AG04449 (cell line): ENCODE measurements at regions of chr17 and their contacts with region 1.

Region 1: DNA sequence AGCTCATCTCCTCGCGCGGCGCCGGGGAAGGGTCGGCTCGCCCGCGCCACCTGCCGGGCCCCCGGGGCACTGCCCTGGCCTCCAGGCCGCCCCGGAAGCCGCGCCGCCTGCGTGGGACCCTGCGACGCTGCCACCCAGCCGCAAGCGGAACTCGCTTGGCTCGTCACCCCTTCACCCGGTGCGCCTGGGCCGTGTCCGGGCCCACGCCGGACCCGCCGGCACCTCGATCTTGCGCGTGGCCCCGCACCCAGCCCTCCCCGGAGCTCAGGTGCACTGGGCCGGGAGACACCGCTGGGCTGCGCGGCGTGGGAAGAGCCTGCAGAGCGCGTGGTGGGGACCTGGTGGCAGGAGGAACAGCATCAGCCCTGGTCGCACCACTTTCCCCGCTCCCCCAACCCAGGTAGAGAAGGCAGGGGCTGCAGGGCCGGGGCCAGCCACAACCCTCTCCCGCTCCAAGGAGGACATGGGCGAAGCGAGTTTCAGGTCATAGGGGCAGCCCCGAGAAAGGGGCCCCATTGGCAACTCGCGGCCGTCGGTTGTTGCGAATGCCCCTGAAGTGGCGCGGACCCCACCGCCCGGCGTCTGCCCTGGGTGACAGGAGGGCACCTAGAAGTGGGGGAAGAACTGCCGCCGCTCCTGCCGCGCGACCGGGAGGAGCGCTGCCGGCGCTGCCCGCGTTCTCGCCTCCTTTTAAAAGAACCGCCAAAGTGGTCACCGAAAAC is 363 bp upstream of the MIF4GD start:
- DNase-seq: no peak
- H3K4me3 ChIP-seq: peak overlapping the region; percentile 71
- CTCF ChIP-seq: peak; percentile 68

Region 2: GRCh38 chr17:75039238-75039637 is 232.2 kb before region 1 on chr17:
- CTCF ChIA-PET with region 1: no interaction called
- POLR2A ChIA-PET with region 1: no interaction called
- DNase-seq: no peak
- H3K4me3 ChIP-seq: no peak overlapping the region
- CTCF ChIP-seq: no peak

Region 3: DNA sequence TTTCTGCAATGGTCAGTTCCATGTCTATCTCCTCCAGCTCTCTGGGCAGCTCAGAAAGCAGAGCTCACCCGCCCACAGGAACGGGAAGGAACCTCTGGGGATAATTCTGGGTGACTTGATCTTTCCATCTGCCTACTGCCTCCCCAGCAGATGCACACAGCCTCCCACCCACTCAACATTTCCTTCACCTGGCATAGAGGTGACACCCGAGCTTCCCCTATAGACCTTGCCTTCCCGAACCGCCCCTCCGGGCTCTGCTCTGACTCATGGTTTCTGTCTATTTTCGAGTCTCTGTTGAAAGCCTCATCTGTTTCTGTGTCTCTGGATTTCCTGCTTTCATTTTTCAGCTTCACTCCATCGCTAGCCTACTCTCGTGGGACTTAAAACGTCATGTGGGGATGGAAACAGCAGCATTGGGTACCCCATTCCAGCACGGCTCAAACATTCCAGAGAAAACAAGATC is 21.4 kb before region 1 on chr17:
- CTCF ChIA-PET with region 1: interaction called, 43 read pairs
- POLR2A ChIA-PET with region 1: interaction called, 3 read pairs
- DNase-seq: no peak
- H3K4me3 ChIP-seq: no peak overlapping the region; the same call in 1 of the 2 replicates
- CTCF ChIP-seq: no peak

Region 4: DNA sequence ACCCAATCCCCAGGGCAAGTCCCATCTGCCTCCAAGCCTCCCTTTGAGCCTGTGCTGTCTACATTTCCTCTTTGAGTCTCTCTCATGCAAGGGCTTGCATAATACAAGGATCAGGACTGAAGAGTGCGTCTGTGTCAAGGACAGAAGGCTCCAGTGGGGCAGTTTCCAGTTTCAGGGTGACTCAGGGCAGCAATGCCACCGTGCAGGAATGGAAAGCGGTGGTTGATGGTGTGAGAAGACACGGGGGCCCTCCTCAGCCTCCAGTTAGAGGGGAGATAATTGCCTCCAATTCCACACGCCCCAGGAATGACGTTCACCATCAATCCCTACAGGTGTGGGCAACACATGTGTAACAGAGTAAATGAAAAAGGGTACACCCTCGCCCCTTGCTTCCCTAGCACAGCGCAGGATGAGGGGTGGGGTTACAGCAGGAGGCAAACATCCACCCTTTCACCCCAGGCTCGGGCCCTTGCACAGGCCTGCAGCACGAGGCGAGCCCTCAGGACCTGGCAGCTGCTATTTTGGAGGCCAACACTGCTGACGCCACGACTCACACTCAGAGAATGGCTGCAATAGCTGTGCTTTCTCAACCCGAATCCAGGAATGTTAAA is 42.7 kb after region 1 on chr17:
- CTCF ChIA-PET with region 1: interaction called, 11 read pairs
- POLR2A ChIA-PET with region 1: no interaction called
- DNase-seq: no peak
- H3K4me3 ChIP-seq: no peak overlapping the region
- CTCF ChIP-seq: no peak

Region 5: GRCh38 chr17:75325827-75326225 is 54.4 kb after region 1 on chr17:
- CTCF ChIA-PET with region 1: interaction called, 24 read pairs
- POLR2A ChIA-PET with region 1: no interaction called
- DNase-seq: no peak
- H3K4me3 ChIP-seq: no peak overlapping the region
- CTCF ChIP-seq: no peak

Region 6: DNA sequence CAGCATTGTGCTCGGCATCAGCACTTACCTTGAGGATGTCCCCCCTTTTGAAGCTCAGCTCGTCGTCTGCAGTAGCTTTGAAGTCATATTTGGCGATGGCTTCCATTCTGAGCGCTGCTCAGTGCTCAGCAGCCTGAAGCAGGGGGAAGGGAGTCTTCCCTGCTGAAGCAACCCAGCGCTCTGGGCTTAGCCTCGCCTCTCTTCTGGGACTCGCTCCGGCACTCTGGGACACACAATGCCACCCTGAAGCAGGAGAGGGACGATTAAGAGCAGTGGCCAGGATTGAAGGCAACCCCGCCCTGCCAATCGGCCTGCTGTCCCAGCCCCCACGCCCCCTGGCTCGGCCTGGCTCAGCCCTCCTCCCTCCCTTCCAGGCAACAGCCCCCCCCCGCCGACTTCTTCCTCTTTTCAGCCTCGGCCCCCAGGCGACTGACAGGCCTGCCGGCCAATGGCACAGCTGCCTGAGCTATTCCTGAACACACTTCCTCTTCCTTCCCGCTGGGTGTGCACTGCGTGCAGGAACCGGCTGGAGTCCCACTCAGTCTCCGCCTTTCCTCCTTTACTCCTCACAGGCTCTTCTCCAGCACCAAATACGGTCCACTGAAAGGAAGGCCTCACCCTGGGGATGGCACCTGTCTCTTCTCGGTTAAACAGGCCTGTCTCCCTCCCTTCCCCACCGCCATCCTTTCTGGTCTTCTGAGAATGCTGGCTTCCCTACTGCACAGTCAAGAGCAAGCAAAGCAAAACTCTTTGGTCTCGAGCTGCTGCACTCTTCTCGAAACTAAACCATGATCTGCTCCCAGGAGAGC is 122.3 kb after region 1 on chr17:
- CTCF ChIA-PET with region 1: interaction called, 55 read pairs
- POLR2A ChIA-PET with region 1: interaction called, 5 read pairs
- DNase-seq: peak; percentile 93
- H3K4me3 ChIP-seq: peak overlapping the region; percentile 88
- CTCF ChIP-seq: no peak

Region 7: DNA sequence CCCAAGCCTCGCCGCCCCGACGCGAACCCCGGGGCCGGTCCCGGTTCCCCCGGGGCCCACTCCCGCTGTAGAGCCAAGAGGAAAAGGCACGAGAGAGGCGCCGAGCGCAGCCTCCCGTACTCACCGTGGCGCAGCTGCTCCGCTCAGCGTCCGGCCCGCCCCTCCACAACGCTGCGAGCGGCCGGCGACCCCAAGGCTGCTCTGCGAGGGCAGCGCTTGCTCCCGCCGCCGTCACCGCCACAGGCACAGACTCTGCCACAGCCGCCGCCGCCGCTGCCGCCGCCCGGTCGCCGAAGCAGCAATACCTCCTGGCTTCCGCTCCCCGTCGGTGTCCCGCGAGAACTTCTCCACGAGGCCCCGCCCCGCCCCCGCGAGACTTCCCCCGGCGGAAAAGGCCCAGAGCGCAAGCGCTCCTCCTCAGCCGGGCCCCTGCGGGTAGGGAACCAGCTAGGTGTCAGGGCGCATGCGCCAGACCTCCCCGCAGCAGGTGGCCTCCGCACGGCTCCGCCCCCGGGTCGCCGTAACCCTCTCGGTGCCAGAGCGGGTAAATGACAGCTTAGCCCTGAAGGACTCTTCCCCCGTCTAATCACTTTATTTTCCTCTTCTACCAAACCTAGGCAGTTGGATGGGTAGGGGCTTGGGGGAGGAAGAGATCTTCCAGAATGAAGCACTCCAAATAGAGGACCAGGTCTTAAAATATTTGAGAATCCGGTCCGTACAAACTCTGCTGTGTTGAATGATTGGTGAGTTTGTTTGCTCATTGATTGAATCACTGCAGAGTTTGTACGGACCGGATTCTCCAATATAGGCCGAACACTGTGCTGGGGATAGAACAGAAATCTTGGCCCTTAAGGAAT is 134.2 kb after region 1 on chr17 and contains the start of gene GRB2:
- CTCF ChIA-PET with region 1: interaction called, 28 read pairs
- POLR2A ChIA-PET with region 1: interaction called, 12 read pairs
- DNase-seq: no peak
- H3K4me3 ChIP-seq: peak within 1 kb of the TSS; percentile 93
- CTCF ChIP-seq: no peak

Region 8: DNA sequence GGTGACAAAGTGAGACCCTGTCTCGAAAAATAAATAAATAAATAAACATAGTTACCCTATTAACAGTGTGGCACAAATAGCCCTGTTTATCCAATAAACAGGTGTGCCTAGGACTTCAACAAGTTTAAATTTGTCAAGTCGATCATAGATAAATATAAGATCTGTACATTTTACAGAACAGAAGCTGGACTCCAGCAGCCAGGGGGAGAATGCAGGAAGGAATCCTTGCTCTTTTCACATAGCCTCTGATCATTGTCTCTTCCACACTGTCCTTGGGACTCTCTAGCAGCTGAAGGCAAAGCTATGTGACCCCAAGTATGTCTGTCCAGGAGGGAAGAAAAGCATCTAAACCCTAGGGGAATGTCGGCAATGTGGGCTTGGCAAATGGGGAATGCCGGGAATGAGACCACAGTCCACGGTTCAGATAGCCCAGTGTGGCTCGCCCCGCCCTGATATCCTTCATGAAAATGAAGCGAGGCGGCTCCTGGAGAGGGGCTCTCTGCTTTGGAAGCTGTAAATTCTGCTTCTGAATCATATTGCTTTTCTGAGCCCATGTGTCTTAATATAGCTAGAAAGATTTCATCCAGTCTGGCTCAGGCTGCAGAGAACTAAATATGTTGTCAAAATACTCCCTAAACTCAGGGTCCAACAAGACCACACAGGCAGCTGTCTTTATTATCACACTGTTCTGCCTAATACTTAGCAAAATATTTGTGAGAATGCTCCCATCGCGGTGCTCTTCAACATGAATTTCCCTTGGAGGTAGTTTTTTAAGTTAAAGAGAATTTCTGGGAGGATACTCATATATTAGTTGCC is 159.0 kb after region 1 on chr17:
- CTCF ChIA-PET with region 1: interaction called, 15 read pairs
- POLR2A ChIA-PET with region 1: no interaction called
- DNase-seq: peak; percentile 82
- H3K4me3 ChIP-seq: no peak overlapping the region; the same call in 1 of the 2 replicates
- CTCF ChIP-seq: no peak